A673 (cell line): ENCODE measurements at regions of chr15 and their contacts with region 1.

Region 1: GRCh38 chr15:38690689-38691332 is 126.2 kb upstream of the RASGRP1 start:
- DNase-seq: peak; percentile 77
- H3K4me3 ChIP-seq: no peak overlapping the region
- H3K27ac ChIP-seq: no peak overlapping the region
- H3K4me1 ChIP-seq: no peaks in the 10 kb centered on the region
- H3K27me3 ChIP-seq: no peaks in the 10 kb centered on the region
- CTCF ChIP-seq: peak; percentile 83

Region 2: DNA sequence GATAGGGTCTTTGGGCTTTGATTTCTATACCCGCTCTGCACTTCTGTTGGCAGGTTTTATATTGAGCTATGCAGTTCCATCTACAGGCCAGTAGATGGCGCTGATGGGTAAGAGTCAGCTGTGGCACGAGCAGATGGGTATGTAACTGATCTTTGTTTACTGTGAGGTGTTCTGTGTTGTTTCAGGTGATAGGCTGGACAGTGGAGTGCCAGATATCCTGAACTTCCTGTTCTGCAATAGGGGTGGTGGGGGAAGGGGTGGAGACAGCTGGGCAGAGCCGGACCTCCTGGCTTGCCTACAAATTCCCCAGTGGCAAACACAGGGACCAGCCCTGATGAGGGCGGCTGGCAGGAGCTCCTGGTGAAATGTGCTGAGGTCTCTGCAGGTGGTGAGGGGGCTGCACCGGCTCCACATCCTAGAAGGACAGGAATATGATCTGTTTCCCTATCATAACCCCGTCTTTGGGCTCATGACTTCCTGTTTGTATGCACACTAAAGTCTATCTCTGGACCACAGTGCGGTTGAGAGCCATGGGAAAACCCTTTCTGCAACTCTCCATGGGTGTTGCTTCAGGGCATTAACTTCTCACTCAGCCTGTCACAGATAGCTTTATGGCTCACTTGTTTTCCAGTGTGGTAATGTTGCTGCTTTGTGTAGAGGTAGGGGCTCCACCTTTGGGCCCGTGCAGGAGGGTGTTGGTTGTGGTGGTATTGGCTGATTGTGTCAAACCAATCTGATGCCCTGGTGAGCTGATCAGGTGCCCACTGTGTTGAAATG is 250.3 kb before region 1 on chr15:
- CTCF ChIA-PET with region 1: interaction called, 16 read pairs
- POLR2A ChIA-PET with region 1: no interaction called
- intact Hi-C with region 1: no loop called
- DNase-seq: peak; percentile 63
- H3K4me3 ChIP-seq: no peak overlapping the region
- H3K27ac ChIP-seq: no peak overlapping the region
- H3K4me1 ChIP-seq: no peaks in the 10 kb centered on the region
- H3K27me3 ChIP-seq: peaks cover 24% of the 10 kb centered on the region
- CTCF ChIP-seq: peak; percentile 97